ENCODE measurements at regions of chr1 and their contacts with region 1.

Region 1: GRCh38 chr1:3721955-3722465 is 30.2 kb upstream of the CCDC27 start:
- H3K4me3 Mint-ChIP-seq: no peak overlapping the region
- H3K27ac Mint-ChIP-seq: no peak overlapping the region
- H3K4me1 Mint-ChIP-seq: peaks cover 6% of the 10 kb centered on the region
- H3K27me3 Mint-ChIP-seq: peaks cover 11% of the 10 kb centered on the region

Region 2: GRCh38 chr1:3491291-3492246 is 230.4 kb before region 1 on chr1:
- intact Hi-C with region 1: loop called (anchors 5 kb)
- H3K4me3 Mint-ChIP-seq: no peak overlapping the region
- H3K27ac Mint-ChIP-seq: no peak overlapping the region
- H3K4me1 Mint-ChIP-seq: peaks cover 7% of the 10 kb centered on the region
- H3K27me3 Mint-ChIP-seq: no peaks in the 10 kb centered on the region

Region 3: DNA sequence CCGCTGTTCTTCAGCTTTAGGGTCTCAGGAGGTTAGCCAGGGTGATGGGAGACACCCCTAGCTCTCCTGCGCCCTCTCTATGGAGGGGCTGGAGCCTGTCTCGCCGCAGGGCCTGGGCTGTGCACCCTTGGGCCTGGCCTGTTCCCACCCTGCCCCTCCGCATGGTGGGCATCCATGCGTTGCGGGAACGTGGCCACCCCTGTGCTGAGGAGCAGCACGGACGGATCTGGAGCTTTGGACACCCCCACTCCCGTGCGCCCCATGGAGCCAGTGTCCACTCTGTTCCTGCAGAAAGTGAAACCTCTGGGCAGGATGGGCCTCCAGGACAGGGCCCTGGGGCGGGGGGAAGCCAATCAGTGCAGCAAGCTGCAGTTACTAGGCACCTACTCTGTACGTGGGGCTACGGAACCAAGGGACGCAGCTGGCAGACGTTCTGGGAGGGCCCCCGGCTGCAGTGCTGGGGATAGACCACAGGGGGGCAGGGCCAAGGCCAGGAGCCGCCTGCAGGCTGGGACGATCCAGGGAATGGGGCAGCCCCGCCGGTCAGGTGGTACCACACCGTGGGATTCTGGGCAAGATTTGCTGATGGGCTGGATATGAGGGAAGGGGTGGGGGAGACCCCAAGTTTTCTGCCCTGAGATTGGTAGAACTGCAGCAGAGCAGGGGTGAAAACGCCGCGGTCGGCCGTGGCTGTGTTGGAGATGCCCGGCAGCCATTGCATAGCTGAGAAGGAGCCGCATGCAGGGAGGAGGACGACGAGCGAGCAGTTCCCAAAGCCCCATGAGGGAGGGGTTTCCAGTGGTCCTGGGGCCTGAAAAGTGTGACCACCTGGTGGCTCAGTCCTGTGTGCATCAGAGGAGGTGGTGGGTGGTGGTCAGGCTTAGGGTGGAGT is 26.4 kb before region 1 on chr1:
- intact Hi-C with region 1: loop called (anchors 2 kb)
- H3K4me3 Mint-ChIP-seq: peak overlapping the region; percentile 48
- H3K27ac Mint-ChIP-seq: no peak overlapping the region
- H3K4me1 Mint-ChIP-seq: peaks cover 7% of the 10 kb centered on the region
- H3K27me3 Mint-ChIP-seq: peaks cover 20% of the 10 kb centered on the region